ENCODE measurements at regions of chr3 and their contacts with region 1.

Region 1: GRCh38 chr3:23877329-23877980 is 39.3 kb downstream of the NKIRAS1 start:
- DNase-seq: peak; percentile 66
- H3K4me3 ChIP-seq: no peak overlapping the region
- H3K27ac ChIP-seq: no peak overlapping the region
- H3K4me1 ChIP-seq: peaks cover 29% of the 10 kb centered on the region
- H3K27me3 ChIP-seq: no peaks in the 10 kb centered on the region
- CTCF ChIP-seq: no peak

Region 2: DNA sequence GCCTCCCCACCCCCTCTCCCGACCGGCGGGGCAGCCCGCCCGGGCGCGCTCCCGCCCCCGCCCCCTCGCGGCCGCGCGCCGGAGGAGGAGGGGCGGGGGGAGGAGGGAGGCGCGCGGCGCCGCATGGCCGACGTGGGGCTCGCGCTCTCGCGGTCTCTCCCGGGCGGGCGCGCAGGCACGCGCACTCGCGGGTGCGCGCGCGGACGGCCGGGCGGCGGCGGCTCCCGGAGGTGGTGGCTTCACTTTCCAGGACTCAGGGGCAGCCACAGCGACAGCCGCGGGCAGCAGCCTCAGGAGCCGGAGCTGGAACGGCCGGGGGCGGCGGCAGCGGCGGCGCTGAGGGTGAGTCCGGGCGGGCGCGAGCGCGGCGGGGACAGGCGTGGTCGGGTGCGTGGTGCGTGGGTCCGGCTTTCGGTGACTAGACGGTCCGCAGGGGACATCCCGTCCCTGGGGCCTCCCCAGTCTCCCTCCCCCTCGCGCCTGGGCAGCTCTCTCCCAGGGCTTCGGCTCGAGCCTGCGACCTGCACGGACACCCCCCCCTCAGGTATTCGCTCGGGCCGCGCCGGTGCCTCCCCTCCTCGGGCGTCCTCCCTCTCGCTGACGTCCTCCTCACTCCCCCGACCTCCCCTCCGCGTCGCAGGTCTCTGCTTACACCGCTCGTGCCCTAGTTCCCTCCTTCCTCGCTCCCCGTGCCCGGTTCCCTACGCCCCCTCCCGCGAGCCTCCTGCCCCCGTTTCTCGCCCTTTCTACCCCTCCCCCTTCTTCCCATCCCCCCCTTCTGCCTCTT is 674.3 kb before region 1 on chr3 and contains the start of gene UBE2E2:
- CTCF ChIA-PET with region 1: no interaction called
- POLR2A ChIA-PET with region 1: no interaction called
- intact Hi-C with region 1: loop called (anchors 10 kb)
- DNase-seq: peak; percentile 60
- H3K4me3 ChIP-seq: peak within 1 kb of the TSS; percentile 56
- H3K27ac ChIP-seq: no peak within 1 kb of the TSS
- H3K4me1 ChIP-seq: no peaks in the 10 kb centered on the region
- H3K27me3 ChIP-seq: peaks cover 63% of the 10 kb centered on the region
- CTCF ChIP-seq: no peak
- total RNA-seq, gene UBE2E2: 0.61 and 2.0 TPM in 2 replicates